ENCODE measurements at regions of chr7 and their contacts with region 1.

Region 1: DNA sequence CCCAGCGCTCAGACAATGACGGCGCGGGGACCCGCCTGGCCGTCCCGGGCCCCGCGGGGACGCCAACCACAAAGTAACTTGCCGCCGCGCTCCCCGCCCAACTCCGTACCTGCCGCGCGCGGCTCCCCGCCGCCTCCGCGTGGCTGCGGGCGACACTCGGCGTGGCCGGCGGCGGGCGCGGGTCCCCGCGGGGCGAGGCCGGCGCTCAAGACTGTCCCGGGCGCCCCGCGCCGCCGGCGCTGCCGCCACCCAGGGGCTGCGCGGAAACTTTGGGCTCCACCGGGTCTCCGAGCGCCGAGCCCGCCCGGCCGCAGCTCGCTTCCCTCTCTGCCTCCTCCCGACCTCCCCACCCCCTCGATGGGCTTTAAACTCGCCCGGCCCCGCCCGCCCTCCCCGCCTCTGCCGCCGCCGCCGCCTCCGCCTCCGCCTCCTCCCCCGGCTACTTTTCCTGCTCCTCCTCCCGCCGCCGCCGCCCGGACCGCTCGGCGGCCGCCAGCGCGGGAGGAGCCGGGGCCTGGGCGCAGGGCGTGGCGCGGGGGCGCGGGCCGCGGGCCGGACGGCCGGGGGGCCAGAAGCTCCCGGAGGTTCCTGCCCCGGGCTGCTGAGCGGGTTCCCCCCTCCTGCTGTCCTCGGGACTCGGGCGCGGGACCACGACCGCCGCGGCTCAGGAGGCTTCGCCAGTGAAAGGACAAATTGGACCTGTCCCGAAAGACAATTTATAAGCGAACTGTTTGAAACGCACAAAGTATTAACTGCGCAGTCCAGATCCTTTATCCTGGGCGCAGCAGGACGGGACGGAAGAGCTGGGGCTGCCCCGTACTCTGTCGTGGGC is 10.6 kb upstream of the GRB10 start:
- DNase-seq: peak; percentile 80 to 90 (median 88)
- ATAC-seq: peak; percentile 79
- H3K4me3 ChIP-seq: peak overlapping the region; percentile 69
- H3K27ac ChIP-seq: peak overlapping the region; percentile 50
- H3K4me1 ChIP-seq: peaks cover 18 to 30% of the 10 kb centered on the region in 2 experiments; a peak in 4 of 5 replicates
- H3K27me3 ChIP-seq: peaks cover 0 to 1% of the 10 kb centered on the region in 2 experiments; a peak in 2 of 5 replicates
- CTCF ChIP-seq: no peak
- EP300 ChIP-seq: no peak
- POLR2A ChIP-seq: no peak
- RAD21 ChIP-seq: no peak

Region 2: GRCh38 chr7:50696810-50697582 is 96.3 kb before region 1 on chr7:
- CTCF ChIA-PET with region 1: no interaction called
- POLR2A ChIA-PET with region 1: no interaction called
- in situ Hi-C with region 1: no loop called
- intact Hi-C with region 1: loop called (anchors 2 kb)
- DNase-seq: peak in 1 of 4 experiments; percentile 51
- ATAC-seq: peak; percentile 87
- H3K4me3 ChIP-seq: no peak overlapping the region
- H3K27ac ChIP-seq: no peak overlapping the region
- H3K4me1 ChIP-seq: peaks cover 3 to 16% of the 10 kb centered on the region in 2 experiments; a peak in 4 of 5 replicates
- H3K27me3 ChIP-seq: no peaks in the 10 kb centered on the region
- CTCF ChIP-seq: peak; percentile 55 to 68 (median 64); a peak in 5 of 6 replicates
- EP300 ChIP-seq: peak; percentile 78
- POLR2A ChIP-seq: no peak
- RAD21 ChIP-seq: peak; percentile 46 to 67; a peak in 3 of 4 replicates

Region 3: GRCh38 chr7:50728184-50728583 is 65.1 kb before region 1 on chr7:
- CTCF ChIA-PET with region 1: no interaction called
- POLR2A ChIA-PET with region 1: interaction called, 3 read pairs
- in situ Hi-C with region 1: no loop called
- intact Hi-C with region 1: loop called (anchors 5 kb)
- DNase-seq: no peak
- ATAC-seq: no peak
- H3K4me3 ChIP-seq: no peak overlapping the region
- H3K27ac ChIP-seq: no peak overlapping the region
- H3K4me1 ChIP-seq: peaks cover 0 to 6% of the 10 kb centered on the region in 2 experiments; a peak in 3 of 5 replicates
- H3K27me3 ChIP-seq: no peaks in the 10 kb centered on the region
- CTCF ChIP-seq: no peak
- EP300 ChIP-seq: no peak
- POLR2A ChIP-seq: no peak
- RAD21 ChIP-seq: no peak

Region 4: DNA sequence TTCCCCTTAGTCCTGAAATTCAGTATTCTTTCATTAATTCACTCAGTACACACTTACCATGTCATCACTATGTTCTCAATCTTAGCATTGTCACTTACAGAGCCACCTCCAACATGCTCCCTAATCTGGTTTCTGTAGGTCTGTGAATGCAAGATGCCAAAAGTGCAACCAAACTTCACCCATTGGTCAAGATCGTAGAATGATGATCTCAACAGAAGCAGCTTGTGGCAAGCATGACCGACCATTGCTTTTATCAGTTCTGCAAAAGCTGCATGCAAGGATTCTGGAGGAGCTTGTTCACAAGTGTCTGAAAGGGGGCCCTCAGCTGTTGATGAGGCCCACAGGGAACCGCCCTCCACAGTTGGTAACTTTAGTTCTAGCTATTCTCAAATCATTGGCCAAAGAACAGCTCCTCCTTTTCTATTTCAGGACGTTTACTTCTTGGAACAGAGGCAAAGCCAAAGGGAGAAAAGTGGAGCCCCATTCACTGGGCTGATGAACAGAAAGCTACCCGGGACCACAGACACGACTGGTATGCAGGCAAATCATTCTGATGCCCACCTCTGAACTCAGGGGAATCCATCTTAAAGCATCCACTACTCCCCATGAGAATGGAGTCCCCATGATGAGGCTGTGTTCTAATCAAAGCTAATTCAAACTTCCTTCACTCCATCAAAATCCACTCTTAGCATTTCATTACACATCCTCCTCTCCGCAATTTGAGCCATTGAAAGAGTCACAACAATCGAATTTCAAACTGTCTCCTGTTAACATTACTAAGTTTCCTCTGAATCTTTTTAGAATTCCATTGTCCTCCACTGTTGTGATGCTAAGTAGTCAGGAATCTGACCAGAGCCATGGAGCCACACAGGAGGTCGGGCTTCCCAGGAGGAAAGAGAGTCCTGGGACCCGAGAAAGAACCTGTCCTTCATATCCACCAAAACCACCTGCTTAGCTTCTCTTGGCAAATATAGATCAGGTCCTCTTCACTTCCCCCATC is 24.5 kb before region 1 on chr7:
- CTCF ChIA-PET with region 1: no interaction called
- POLR2A ChIA-PET with region 1: interaction called, 12 read pairs
- in situ Hi-C with region 1: no loop called
- intact Hi-C with region 1: no loop called
- DNase-seq: peak in 1 of 4 experiments; percentile 30
- ATAC-seq: peak; percentile 18
- H3K4me3 ChIP-seq: no peak overlapping the region
- H3K27ac ChIP-seq: no peak overlapping the region
- H3K4me1 ChIP-seq: peaks cover 0 to 14% of the 10 kb centered on the region in 2 experiments; a peak in 3 of 5 replicates
- H3K27me3 ChIP-seq: no peaks in the 10 kb centered on the region
- CTCF ChIP-seq: no peak
- EP300 ChIP-seq: no peak
- POLR2A ChIP-seq: no peak
- RAD21 ChIP-seq: no peak

Region 5: DNA sequence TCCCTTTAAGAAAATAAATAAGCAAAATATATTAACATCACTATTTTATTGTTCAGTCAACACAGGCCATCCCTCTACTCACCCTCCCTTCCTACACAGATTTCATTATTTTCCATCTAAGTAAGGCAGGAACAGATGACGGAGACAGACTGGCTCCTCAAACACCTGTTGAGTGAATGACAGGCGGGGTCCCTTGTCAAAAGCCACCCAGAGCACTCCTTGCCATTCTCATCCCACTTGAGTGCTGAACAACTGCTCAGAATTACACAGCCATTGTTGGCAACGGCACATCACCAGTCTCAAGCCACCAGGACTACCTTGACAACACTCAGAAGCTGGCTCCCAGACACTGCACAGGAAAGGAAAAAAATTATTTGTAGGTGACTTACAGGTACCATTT is 13.9 kb before region 1 on chr7:
- CTCF ChIA-PET with region 1: no interaction called
- POLR2A ChIA-PET with region 1: interaction called, 15 read pairs
- in situ Hi-C with region 1: no loop called
- intact Hi-C with region 1: no loop called
- DNase-seq: no peak
- ATAC-seq: no peak
- H3K4me3 ChIP-seq: no peak overlapping the region
- H3K27ac ChIP-seq: no peak overlapping the region
- H3K4me1 ChIP-seq: peaks cover 2 to 29% of the 10 kb centered on the region in 2 experiments; a peak in 3 of 5 replicates
- H3K27me3 ChIP-seq: no peaks in the 10 kb centered on the region
- CTCF ChIP-seq: no peak
- EP300 ChIP-seq: no peak
- POLR2A ChIP-seq: no peak
- RAD21 ChIP-seq: no peak